ENCODE measurements at regions of chrX and their contacts with region 1.

Region 1: GRCh38 chrX:15789979-15790768 is at the start of gene ZRSR2:
- DNase-seq: peak; percentile 68 to 94 (median 89)
- ATAC-seq: peak; percentile 92
- H3K4me3 ChIP-seq: peak within 1 kb of the TSS; percentile 78 to 85
- H3K4me3 Mint-ChIP-seq: no peak within 1 kb of the TSS
- H3K27ac ChIP-seq: peak within 1 kb of the TSS; percentile 89 to 92
- H3K27ac Mint-ChIP-seq: no peak within 1 kb of the TSS
- H3K4me1 ChIP-seq: peaks cover 18% of the 10 kb centered on the region
- H3K4me1 Mint-ChIP-seq: peaks cover 27% of the 10 kb centered on the region
- H3K27me3 ChIP-seq: no peaks in the 10 kb centered on the region
- H3K27me3 Mint-ChIP-seq: no peaks in the 10 kb centered on the region
- CTCF ChIP-seq: no peak
- total RNA-seq, gene ZRSR2: 21.1 to 21.2 TPM

Region 2: DNA sequence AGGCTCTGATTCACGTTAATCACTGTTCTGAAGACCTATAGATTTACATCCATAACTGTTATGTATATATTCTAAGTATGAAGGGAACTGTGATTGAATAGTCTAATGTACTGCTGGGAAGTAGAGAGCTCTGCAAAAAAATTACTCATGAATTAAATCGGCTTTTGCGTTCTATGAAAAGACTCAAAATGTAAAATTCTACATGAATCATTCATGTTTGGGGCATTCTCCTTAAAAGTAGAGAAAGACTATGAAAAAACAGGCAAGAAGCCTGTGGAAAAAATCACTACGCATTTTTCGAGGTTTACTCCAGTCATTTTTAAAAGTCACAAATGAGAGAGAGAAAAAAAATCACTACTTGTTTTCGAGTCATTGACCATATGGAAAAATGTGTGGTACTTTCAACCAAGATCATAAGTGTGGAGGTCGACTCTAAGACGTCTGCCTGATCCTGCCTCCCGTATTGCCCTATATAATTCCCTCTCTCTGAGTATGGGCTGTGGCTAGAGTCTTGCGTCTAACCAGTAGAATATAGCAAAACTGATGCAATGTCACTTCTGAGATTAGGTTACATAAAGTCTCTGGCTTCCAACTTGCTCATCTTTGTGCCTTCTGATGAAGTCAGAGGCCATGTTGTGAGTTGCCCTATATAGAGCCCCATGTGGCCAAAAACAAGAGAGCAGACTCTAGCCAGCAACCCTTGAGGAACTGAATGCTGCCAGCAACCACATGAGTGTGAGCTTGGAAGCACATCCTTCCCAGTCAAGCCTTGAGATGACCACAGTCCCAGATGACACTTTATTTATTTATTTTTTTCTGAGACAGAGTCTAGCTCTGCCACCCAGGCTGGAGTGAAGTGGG is 373.8 kb before region 1 on chrX:
- CTCF ChIA-PET with region 1: no interaction called
- POLR2A ChIA-PET with region 1: no interaction called
- intact Hi-C with region 1: no loop called
- DNase-seq: no peak
- ATAC-seq: no peak
- H3K4me3 ChIP-seq: no peak overlapping the region
- H3K4me3 Mint-ChIP-seq: no peak overlapping the region
- H3K27ac ChIP-seq: no peak overlapping the region
- H3K27ac Mint-ChIP-seq: no peak overlapping the region
- H3K4me1 ChIP-seq: no peaks in the 10 kb centered on the region
- H3K4me1 Mint-ChIP-seq: no peaks in the 10 kb centered on the region
- H3K27me3 ChIP-seq: no peaks in the 10 kb centered on the region
- H3K27me3 Mint-ChIP-seq: peaks cover 7% of the 10 kb centered on the region
- CTCF ChIP-seq: no peak

Region 3: DNA sequence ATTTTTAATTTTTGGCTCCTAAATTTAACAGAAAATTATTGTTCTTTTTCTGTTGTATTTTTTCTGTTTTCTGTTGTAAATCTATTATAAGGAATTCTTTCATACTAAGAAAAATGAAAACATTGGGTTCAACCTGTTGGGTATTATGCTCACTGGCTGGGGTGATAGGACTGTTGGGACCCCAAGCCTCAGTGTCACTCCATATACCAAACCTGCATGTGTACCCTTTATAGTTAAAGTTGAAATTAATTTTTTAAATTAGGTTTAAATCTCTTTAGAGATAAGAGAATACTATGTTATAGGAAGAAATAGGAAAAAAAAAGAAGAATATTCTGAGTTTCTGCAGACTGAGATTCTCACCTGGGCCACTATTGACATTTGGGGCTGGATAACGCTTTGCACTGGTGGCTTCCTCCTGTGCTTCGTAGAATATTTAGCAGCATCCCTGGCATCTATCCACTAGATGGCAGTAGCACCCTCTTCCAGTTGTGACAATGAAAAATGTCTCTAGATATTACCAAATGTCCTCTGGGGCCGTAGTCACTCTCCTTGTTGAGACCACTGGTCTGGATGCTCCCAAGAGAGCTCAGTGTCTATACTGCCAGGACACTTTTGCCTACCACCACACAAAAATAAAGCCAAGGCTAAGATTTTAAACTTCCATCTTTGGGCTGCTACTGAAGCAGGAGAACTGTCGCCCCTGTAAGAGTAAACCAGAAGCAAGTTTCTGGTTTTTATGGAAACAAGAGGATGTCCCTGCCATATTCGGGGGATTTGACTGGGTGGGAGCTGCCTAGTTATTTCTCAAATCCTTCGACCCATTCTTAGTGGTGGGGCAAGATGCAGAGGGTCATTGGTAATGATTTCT is 103.1 kb before region 1 on chrX:
- CTCF ChIA-PET with region 1: no interaction called
- POLR2A ChIA-PET with region 1: no interaction called
- intact Hi-C with region 1: loop called in 1 of 2 experiments (anchors 1 kb)
- DNase-seq: peak; percentile 16 to 79 (median 60)
- ATAC-seq: peak; percentile 87
- H3K4me3 ChIP-seq: no peak overlapping the region
- H3K4me3 Mint-ChIP-seq: no peak overlapping the region
- H3K27ac ChIP-seq: no peak overlapping the region
- H3K27ac Mint-ChIP-seq: no peak overlapping the region
- H3K4me1 ChIP-seq: peaks cover 5% of the 10 kb centered on the region
- H3K4me1 Mint-ChIP-seq: peaks cover 7% of the 10 kb centered on the region
- H3K27me3 ChIP-seq: no peaks in the 10 kb centered on the region
- H3K27me3 Mint-ChIP-seq: no peaks in the 10 kb centered on the region
- CTCF ChIP-seq: peak; percentile 45

Region 4: DNA sequence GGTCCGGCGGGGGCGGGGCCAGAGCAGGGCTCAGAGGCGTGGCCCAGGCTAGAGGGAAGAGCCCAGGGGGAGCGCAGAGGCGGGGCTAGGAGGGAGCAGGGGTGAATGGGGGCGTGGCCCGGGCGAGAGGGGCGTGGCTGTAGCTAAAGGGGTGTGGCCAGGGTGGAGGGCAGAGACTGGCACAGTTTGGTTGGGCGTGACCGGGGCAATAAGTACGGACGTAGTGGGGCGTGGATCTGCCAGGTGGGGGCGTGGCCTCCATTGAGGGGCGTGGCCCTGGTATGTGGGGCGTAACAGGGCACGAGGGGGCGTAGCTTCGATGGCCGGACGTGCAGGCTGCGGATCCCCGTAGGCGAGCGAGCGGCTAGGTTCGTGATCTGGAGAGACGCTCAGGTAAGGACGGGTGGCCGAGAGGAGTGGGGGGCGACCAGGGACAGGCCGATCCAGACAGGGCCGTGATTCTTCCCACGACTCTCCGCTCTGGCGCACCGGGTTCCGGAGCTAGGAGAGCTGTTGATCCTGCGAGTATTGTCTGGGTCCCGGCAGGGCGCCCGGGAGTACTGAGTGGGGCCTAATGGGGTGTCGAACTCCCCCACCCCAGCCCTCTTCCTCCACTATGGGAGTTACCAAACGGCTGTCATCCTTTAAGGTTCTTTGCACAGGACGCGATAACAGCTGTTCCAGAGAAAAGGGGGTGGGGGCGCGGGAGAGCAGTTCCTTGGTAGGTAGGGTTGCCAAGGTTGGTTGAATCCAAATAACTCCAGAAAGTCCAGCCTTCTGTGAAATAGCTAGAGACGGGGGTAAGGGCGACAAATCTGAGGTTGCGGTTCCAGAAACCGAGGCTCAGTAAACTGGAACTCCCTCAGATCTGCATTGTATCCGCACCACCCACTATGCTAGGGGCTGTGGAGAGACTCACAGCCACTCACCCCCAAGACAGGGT is 51.9 kb before region 1 on chrX and contains the start of gene CA5B:
- CTCF ChIA-PET with region 1: interaction called, 5 read pairs
- POLR2A ChIA-PET with region 1: interaction called, 12 read pairs
- intact Hi-C with region 1: loop called (anchors 1 kb)
- DNase-seq: peak; percentile 93 to 100 (median 96)
- ATAC-seq: peak; percentile 96
- H3K4me3 ChIP-seq: peak within 1 kb of the TSS; percentile 84 to 85
- H3K4me3 Mint-ChIP-seq: peak within 1 kb of the TSS; percentile 94
- H3K27ac ChIP-seq: peak within 1 kb of the TSS; percentile 76 to 81
- H3K27ac Mint-ChIP-seq: peak within 1 kb of the TSS; percentile 92
- H3K4me1 ChIP-seq: peaks cover 23% of the 10 kb centered on the region
- H3K4me1 Mint-ChIP-seq: peaks cover 41% of the 10 kb centered on the region
- H3K27me3 ChIP-seq: no peaks in the 10 kb centered on the region
- H3K27me3 Mint-ChIP-seq: no peaks in the 10 kb centered on the region
- CTCF ChIP-seq: no peak
- total RNA-seq, gene CA5B: 33.9 to 35.2 TPM

Region 5: GRCh38 chrX:16719334-16720084 is 929.3 kb after region 1 on chrX and contains the start of gene SYAP1:
- CTCF ChIA-PET with region 1: no interaction called
- POLR2A ChIA-PET with region 1: no interaction called
- intact Hi-C with region 1: loop called in 1 of 2 experiments (anchors 10 kb)
- DNase-seq: peak; percentile 84 to 99 (median 91)
- ATAC-seq: peak; percentile 84
- H3K4me3 ChIP-seq: peak within 1 kb of the TSS; percentile 61 to 87
- H3K4me3 Mint-ChIP-seq: peak within 1 kb of the TSS; percentile 91
- H3K27ac ChIP-seq: peak within 1 kb of the TSS; percentile 95 to 98
- H3K27ac Mint-ChIP-seq: peak within 1 kb of the TSS; percentile 99
- H3K4me1 ChIP-seq: peaks cover 17% of the 10 kb centered on the region
- H3K4me1 Mint-ChIP-seq: peaks cover 34% of the 10 kb centered on the region
- H3K27me3 ChIP-seq: no peaks in the 10 kb centered on the region
- H3K27me3 Mint-ChIP-seq: no peaks in the 10 kb centered on the region
- CTCF ChIP-seq: no peak
- total RNA-seq, gene SYAP1: 71.1 to 76.5 TPM